Heart right ventricle (tissue), 16 donors: ENCODE measurements at regions of chr1 and their contacts with region 1.

Region 1: DNA sequence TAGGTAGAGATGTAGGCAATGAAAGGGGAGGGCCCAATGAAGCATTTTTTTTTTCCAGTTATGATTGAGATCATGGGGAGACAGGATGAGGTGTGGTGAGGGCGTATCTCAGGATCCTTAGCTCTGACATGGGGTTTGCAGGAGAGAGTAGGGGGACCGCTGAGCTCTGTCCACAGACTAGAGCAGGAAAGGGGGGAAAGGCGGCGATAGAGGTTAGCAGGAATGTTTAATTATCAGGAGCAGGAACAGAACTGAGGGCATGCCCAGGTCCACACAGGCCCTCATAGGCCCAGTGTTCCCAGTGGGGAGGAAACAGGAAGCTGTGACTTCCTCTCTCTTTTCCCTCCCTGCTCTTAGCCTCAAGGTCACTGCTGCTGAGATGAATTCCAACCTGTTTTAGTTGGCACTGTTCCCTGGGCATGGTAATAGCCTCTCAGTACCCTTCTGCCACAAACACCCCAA is 876 bp upstream of the RXFP4 start:
- DNase-seq: peak in 1 of 2 donors; percentile 74
- ATAC-seq: peak; percentile 65 to 86 (median 81)
- H3K4me3 ChIP-seq: peak overlapping the region in 1 of 10 donors; percentile 14
- H3K27ac ChIP-seq: peak overlapping the region; percentile 80 to 96 (median 85)
- H3K4me1 ChIP-seq: peaks cover 32 to 73% (median 56%) of the 10 kb centered on the region in 9 donors
- H3K27me3 ChIP-seq: no peaks in the 10 kb centered on the region
- CTCF ChIP-seq: no peak

Region 2: GRCh38 chr1:155744711-155745283 is 195.8 kb before region 1 on chr1:
- intact Hi-C with region 1: no loop called
- DNase-seq: no peak
- ATAC-seq: no peak
- H3K4me3 ChIP-seq: peak overlapping the region; percentile 5 to 72 (median 64)
- H3K27ac ChIP-seq: peak overlapping the region in 9 of 10 donors; percentile 17 to 85 (median 74)
- H3K4me1 ChIP-seq: peaks cover 0 to 7% (median 6%) of the 10 kb centered on the region in 9 donors
- H3K27me3 ChIP-seq: no peaks in the 10 kb centered on the region
- CTCF ChIP-seq: no peak

Region 3: GRCh38 chr1:155978325-155978972 is 37.9 kb after region 1 on chr1 and contains the start of gene ARHGEF2:
- intact Hi-C with region 1: loop called in 6 of 10 experiments (anchors 2 to 5 kb)
- DNase-seq: peak; percentile 87
- ATAC-seq: peak; percentile 64 to 82 (median 76)
- H3K4me3 ChIP-seq: peak within 1 kb of the TSS; percentile 66 to 97 (median 88)
- H3K27ac ChIP-seq: peak within 1 kb of the TSS; percentile 86 to 99 (median 96)
- H3K4me1 ChIP-seq: peaks cover 34 to 89% (median 80%) of the 10 kb centered on the region in 9 donors
- H3K27me3 ChIP-seq: no peaks in the 10 kb centered on the region
- CTCF ChIP-seq: peak in 7 of 9 donors; percentile 12 to 55 (median 31)
- total RNA-seq, gene ARHGEF2: 48.6 to 79.8 (median 58.2) TPM

Region 4: GRCh38 chr1:155989242-155990004 is 48.9 kb after region 1 on chr1:
- intact Hi-C with region 1: loop called (anchors 1 to 5 kb)
- DNase-seq: peak; percentile 66 to 73
- ATAC-seq: peak; percentile 86 to 94 (median 92)
- H3K4me3 ChIP-seq: peak overlapping the region in 9 of 10 donors; percentile 20 to 56 (median 47)
- H3K27ac ChIP-seq: peak overlapping the region in 9 of 10 donors; percentile 3 to 90 (median 50)
- H3K4me1 ChIP-seq: peaks cover 6 to 37% (median 14%) of the 10 kb centered on the region in 9 donors
- H3K27me3 ChIP-seq: no peaks in the 10 kb centered on the region
- CTCF ChIP-seq: peak; percentile 93 to 100 (median 98)